CD4-positive, alpha-beta T cell (primary cell): ENCODE measurements at regions of chr1 and their contacts with region 1.

Region 1: GRCh38 chr1:91021686-91022517 is at the start of gene ZNF644:
- DNase-seq: peak; percentile 79 to 97 (median 84)
- ATAC-seq: peak; percentile 83
- H3K4me3 ChIP-seq: peak within 1 kb of the TSS; percentile 90
- H3K4me3 Mint-ChIP-seq: peak within 1 kb of the TSS; percentile 87
- H3K27ac ChIP-seq: peak within 1 kb of the TSS; percentile 99 to 100
- H3K27ac Mint-ChIP-seq: peak within 1 kb of the TSS; percentile 91
- H3K4me1 ChIP-seq: peaks cover 34% of the 10 kb centered on the region
- H3K4me1 Mint-ChIP-seq: peaks cover 77% of the 10 kb centered on the region
- H3K27me3 ChIP-seq: no peaks in the 10 kb centered on the region
- H3K27me3 Mint-ChIP-seq: no peaks in the 10 kb centered on the region
- CTCF ChIP-seq: no peak
- total RNA-seq, gene ZNF644: 93.3 to 101 TPM

Region 2: DNA sequence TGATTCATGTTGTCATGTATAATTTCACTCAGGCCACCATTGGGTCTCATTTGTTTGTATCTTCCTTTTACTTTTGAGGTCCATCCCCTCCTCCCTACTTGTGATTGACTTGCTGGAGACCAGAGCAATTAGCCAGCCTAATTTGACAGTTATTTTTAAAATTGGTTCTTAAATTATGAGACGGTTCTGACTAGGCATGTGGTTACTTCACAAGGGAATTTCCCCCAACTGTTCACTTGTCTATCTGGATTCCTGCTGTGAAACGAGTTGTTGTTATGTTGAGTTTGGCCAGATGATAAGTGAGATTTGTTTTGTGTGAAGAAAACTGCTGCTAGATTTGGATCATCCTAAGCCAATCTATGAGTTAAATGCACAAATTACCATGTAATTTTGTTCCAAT is 663.9 kb before region 1 on chr1:
- CTCF ChIA-PET with region 1: no interaction called
- POLR2A ChIA-PET with region 1: no interaction called
- intact Hi-C with region 1: no loop called
- DNase-seq: no peak
- ATAC-seq: no peak
- H3K4me3 ChIP-seq: no peak overlapping the region
- H3K4me3 Mint-ChIP-seq: no peak overlapping the region
- H3K27ac ChIP-seq: no peak overlapping the region
- H3K27ac Mint-ChIP-seq: no peak overlapping the region
- H3K4me1 ChIP-seq: no peaks in the 10 kb centered on the region
- H3K4me1 Mint-ChIP-seq: no peaks in the 10 kb centered on the region
- H3K27me3 ChIP-seq: no peaks in the 10 kb centered on the region
- H3K27me3 Mint-ChIP-seq: peaks cover 6% of the 10 kb centered on the region
- CTCF ChIP-seq: no peak

Region 3: DNA sequence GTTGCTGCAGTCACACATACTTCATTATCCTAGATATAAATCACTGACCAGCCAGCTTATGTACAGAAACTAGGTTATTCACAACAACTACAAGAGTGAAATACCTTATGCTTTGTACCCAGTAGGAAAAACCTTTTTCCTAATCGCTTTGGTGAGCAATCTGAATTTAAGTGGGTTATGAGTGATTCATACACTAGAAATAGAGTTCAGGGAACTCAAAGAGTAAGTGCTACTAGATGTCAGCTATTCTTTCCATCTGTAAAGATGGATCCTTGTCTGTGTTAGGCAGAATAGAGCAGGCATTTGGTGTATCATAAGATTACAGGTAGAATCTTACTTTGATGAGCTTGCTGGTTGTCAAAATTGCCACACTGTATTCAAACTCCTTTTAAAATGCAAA is 102.0 kb before region 1 on chr1:
- CTCF ChIA-PET with region 1: no interaction called
- POLR2A ChIA-PET with region 1: interaction called, 4 read pairs
- intact Hi-C with region 1: loop called in 1 of 2 experiments (anchors 5 kb)
- DNase-seq: no peak
- ATAC-seq: no peak
- H3K4me3 ChIP-seq: no peak overlapping the region
- H3K4me3 Mint-ChIP-seq: peak overlapping the region; percentile 49
- H3K27ac ChIP-seq: no peak overlapping the region
- H3K27ac Mint-ChIP-seq: peak overlapping the region; percentile 57
- H3K4me1 ChIP-seq: peaks cover under 1% of the 10 kb centered on the region
- H3K4me1 Mint-ChIP-seq: peaks cover 66% of the 10 kb centered on the region
- H3K27me3 ChIP-seq: no peaks in the 10 kb centered on the region
- H3K27me3 Mint-ChIP-seq: no peaks in the 10 kb centered on the region
- CTCF ChIP-seq: no peak

Region 4: DNA sequence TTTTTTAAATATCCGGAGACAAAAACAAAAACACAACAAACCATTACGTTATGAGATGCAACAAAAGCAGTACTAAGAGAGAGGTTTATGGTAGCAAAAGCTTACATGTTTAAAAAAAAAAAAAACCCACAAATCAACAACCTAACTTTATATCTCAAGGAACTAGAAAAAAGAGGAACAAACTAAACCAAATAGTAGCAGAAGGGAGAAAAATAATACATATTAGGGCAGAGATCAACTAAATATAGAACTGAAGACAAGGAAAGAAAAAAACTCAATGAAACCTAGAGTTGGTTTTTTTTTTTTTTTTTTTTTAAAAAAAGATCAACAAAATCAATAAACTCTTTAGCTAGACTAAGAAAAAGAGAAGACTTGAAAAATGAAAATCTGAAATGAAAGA is 34.9 kb before region 1 on chr1:
- CTCF ChIA-PET with region 1: no interaction called
- POLR2A ChIA-PET with region 1: no interaction called
- intact Hi-C with region 1: loop called in 1 of 2 experiments (anchors 5 kb)
- DNase-seq: no peak
- ATAC-seq: no peak
- H3K4me3 ChIP-seq: no peak overlapping the region
- H3K4me3 Mint-ChIP-seq: peak overlapping the region; percentile 5
- H3K27ac ChIP-seq: no peak overlapping the region
- H3K27ac Mint-ChIP-seq: no peak overlapping the region
- H3K4me1 ChIP-seq: no peaks in the 10 kb centered on the region
- H3K4me1 Mint-ChIP-seq: peaks cover 84% of the 10 kb centered on the region
- H3K27me3 ChIP-seq: no peaks in the 10 kb centered on the region
- H3K27me3 Mint-ChIP-seq: no peaks in the 10 kb centered on the region
- CTCF ChIP-seq: no peak

Region 5: GRCh38 chr1:91165033-91165654 is 143.2 kb after region 1 on chr1:
- CTCF ChIA-PET with region 1: interaction called, 6 read pairs
- POLR2A ChIA-PET with region 1: no interaction called
- intact Hi-C with region 1: loop called in 1 of 2 experiments (anchors 2 kb)
- DNase-seq: peak; percentile 30 to 75 (median 57)
- ATAC-seq: no peak
- H3K4me3 ChIP-seq: no peak overlapping the region
- H3K4me3 Mint-ChIP-seq: no peak overlapping the region
- H3K27ac ChIP-seq: no peak overlapping the region
- H3K27ac Mint-ChIP-seq: no peak overlapping the region
- H3K4me1 ChIP-seq: peaks cover 4% of the 10 kb centered on the region
- H3K4me1 Mint-ChIP-seq: peaks cover 8% of the 10 kb centered on the region
- H3K27me3 ChIP-seq: no peaks in the 10 kb centered on the region
- H3K27me3 Mint-ChIP-seq: no peaks in the 10 kb centered on the region
- CTCF ChIP-seq: peak; percentile 92